Activated CD8-positive, alpha-beta T cell treated with anti-CD3 and anti-CD28 coated beads, Interleukin-2, amount 10 ng/mL, durations not matched to agents 7 days and 5 days (primary cell): ENCODE measurements at regions of chr22 and their contacts with region 1.

Region 1: GRCh38 chr22:37218771-37219411 is 6.6 kb upstream of the SSTR3 start:
- DNase-seq: peak; percentile 86
- ATAC-seq: peak; percentile 76
- H3K4me3 Mint-ChIP-seq: peak overlapping the region; percentile 66
- H3K27ac Mint-ChIP-seq: peak overlapping the region; percentile 87
- H3K4me1 Mint-ChIP-seq: peaks cover 80% of the 10 kb centered on the region
- H3K27me3 Mint-ChIP-seq: no peaks in the 10 kb centered on the region

Region 2: GRCh38 chr22:36884349-36885117 is 334.4 kb before region 1 on chr22:
- CTCF ChIA-PET with region 1: no interaction called
- POLR2A ChIA-PET with region 1: no interaction called
- DNase-seq: no peak
- ATAC-seq: no peak
- H3K4me3 Mint-ChIP-seq: no peak overlapping the region
- H3K27ac Mint-ChIP-seq: no peak overlapping the region
- H3K4me1 Mint-ChIP-seq: peaks cover 12% of the 10 kb centered on the region
- H3K27me3 Mint-ChIP-seq: peaks cover 3% of the 10 kb centered on the region

Region 3: DNA sequence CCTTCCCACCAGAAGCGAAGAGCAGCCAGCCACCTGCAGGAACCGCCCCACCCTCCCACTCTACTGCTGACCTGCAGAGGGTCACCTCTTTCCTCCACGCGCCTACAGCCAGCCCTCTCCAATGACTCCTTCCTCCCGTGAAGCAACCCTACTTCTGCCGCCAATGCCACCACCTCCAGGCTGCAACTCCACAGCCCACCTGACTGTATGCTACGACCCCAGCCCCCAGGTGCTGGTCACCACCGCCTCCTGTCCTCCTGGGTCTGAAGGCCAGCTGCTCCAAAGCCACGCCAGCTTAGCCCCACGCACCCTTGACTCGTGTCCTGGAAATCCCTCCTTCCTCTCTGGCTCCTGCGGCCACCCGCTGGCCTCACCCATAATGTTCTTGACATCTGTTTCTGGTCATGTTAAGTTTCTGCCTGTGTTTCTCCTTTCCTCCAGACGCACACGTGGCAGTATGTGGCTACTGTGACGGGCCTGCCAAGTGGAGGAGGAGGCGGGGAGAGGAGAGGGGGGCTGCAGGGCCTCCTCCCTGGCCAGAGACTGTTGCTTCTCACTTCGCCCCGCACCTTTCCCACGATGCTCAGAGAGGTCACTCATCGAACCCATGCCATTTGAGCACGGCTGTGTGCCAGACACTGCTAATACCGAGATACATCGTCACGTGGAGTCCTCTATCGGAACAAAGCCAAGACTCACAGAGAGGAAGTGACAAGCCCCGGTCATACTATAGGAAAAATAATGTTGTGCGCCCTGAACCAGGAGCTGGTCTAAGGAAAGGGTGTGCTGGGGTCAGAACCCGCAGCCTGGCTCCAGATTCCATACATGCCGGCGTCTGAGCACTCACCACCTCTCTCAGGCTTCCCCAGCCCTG is 42.4 kb before region 1 on chr22:
- CTCF ChIA-PET with region 1: no interaction called
- POLR2A ChIA-PET with region 1: no interaction called
- DNase-seq: no peak
- ATAC-seq: peak; percentile 49
- H3K4me3 Mint-ChIP-seq: no peak overlapping the region
- H3K27ac Mint-ChIP-seq: peak overlapping the region; percentile 68
- H3K4me1 Mint-ChIP-seq: peaks cover 25% of the 10 kb centered on the region
- H3K27me3 Mint-ChIP-seq: peaks cover 6% of the 10 kb centered on the region

Region 4: DNA sequence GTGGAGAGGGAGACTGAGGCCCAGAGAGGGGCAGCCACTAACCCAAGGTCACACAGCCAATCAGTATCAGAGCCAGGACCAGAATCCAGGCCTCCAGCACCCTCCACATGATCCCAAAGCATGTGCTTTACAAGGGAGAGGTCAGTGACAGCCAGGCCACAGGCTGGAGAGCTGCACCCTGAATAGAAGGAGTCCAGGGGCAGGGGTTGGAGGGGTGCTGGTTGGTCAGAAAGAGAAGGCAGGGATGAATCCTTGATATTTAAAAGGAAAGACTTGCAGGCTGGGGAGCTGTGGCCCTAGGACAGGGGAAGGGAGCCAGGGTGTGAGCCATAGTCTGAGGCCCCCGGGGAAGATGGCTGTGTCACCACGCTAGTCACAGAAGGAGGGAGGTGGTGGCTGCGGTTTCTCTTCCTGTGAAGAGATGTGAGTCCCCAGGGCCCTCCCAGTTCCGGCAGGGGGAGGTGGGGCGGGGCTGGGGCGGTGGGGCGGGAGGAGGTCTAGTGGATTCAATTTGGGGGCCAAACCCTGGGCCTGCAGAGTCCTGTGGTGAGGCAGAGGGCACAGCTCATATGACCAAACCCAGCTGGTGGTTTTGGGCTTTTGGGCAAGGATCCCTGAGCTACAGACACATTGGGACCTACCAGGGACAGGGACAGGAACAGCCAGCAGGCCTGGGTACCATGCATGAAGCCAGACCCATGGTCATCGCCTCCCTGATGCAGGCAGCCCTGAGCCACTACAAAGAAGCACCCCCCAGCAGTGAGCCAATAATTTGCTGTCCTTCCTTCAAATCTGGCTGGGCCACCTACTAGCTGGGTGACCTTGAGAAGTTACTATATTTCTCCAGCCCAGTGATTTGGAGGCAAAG is 11.1 kb after region 1 on chr22:
- CTCF ChIA-PET with region 1: interaction called, 10 read pairs
- POLR2A ChIA-PET with region 1: interaction called, 91 read pairs
- DNase-seq: peak; percentile 97
- ATAC-seq: peak; percentile 76
- H3K4me3 Mint-ChIP-seq: peak overlapping the region; percentile 80
- H3K27ac Mint-ChIP-seq: peak overlapping the region; percentile 100
- H3K4me1 Mint-ChIP-seq: peaks cover 90% of the 10 kb centered on the region
- H3K27me3 Mint-ChIP-seq: no peaks in the 10 kb centered on the region

Region 5: GRCh38 chr22:37237371-37238268 is 18.7 kb after region 1 on chr22:
- CTCF ChIA-PET with region 1: interaction called, 12 read pairs
- POLR2A ChIA-PET with region 1: interaction called, 249 read pairs
- DNase-seq: no peak
- ATAC-seq: no peak
- H3K4me3 Mint-ChIP-seq: peak overlapping the region; percentile 99
- H3K27ac Mint-ChIP-seq: peak overlapping the region; percentile 99
- H3K4me1 Mint-ChIP-seq: peaks cover 88% of the 10 kb centered on the region
- H3K27me3 Mint-ChIP-seq: no peaks in the 10 kb centered on the region

Region 6: DNA sequence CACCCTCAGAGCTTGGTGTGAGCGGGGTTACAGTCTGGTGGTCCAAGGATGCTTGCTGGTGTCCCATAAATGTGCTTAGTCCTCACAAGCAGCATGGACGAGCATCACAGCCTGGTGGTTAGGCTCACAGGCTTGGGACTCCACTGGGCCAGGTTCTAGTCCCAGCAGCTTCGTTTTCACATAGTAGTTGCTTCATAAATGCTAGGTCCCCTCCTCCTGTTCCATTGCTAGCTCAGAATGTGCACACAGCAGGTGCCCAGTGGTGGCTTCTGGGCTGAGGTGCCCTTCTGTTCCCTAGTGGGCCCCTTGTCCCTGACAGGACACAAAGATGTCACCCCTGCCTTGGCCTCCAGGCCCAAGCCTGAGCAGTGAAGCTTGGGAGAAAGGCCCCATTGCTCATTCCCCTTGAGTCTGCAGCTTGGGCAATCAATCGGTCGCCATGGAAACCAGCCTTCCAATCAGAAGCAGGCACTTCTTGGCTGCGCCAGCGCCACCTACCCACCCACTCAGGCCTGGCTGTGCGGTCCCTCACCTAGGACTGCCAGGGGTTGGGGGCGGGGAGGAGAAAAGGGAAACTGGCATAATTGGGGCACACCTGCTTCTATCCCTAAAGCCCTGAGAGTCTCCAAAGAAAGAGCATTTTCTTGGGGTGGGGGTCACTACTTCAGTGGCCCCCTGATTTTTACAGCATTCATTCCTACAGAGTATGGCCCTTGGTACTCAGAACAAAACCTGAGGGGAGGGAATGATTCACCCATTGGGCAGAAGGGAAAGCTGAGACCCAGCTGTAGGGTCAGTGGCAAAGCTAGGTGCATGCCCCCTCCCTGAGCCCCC is 111.5 kb after region 1 on chr22:
- CTCF ChIA-PET with region 1: no interaction called
- POLR2A ChIA-PET with region 1: no interaction called
- DNase-seq: peak; percentile 43
- ATAC-seq: peak; percentile 59
- H3K4me3 Mint-ChIP-seq: no peak overlapping the region
- H3K27ac Mint-ChIP-seq: no peak overlapping the region
- H3K4me1 Mint-ChIP-seq: peaks cover 7% of the 10 kb centered on the region
- H3K27me3 Mint-ChIP-seq: peaks cover 65% of the 10 kb centered on the region